Heart right ventricle (tissue), 16 donors: ENCODE measurements at regions of chr11 and their contacts with region 1.

Region 1: GRCh38 chr11:8813658-8814057 is 97.3 kb upstream of the AKIP1 start:
- DNase-seq: peak; percentile 75 to 81
- ATAC-seq: peak; percentile 35 to 61 (median 48)
- H3K4me3 ChIP-seq: no peak overlapping the region
- H3K27ac ChIP-seq: peak overlapping the region in 8 of 10 donors; percentile 31 to 63 (median 43)
- H3K4me1 ChIP-seq: peaks cover 6 to 65% (median 31%) of the 10 kb centered on the region in 9 donors
- H3K27me3 ChIP-seq: no peaks in the 10 kb centered on the region
- CTCF ChIP-seq: peak; percentile 63 to 94 (median 88)

Region 2: GRCh38 chr11:8682303-8683114 is 131.1 kb before region 1 on chr11 and contains the starts of genes RPL27A and TRIM66:
- intact Hi-C with region 1: loop called in 8 of 10 experiments (anchors 2 to 5 kb)
- DNase-seq: peak; percentile 99
- ATAC-seq: peak; percentile 97 to 100 (median 99)
- H3K4me3 ChIP-seq: peak within 1 kb of the TSS; percentile 69 to 99 (median 90)
- H3K27ac ChIP-seq: peak within 1 kb of the TSS; percentile 81 to 97 (median 96)
- H3K4me1 ChIP-seq: peaks cover 6 to 40% (median 30%) of the 10 kb centered on the region in 9 donors
- H3K27me3 ChIP-seq: no peaks in the 10 kb centered on the region
- CTCF ChIP-seq: peak in 4 of 9 donors; percentile 7 to 39 (median 20)
- total RNA-seq, gene RPL27A: 317 to 560 (median 381) TPM
- total RNA-seq, gene TRIM66: 1.8 to 7.4 (median 2.8) TPM

Region 3: GRCh38 chr11:8699903-8700302 is 113.8 kb before region 1 on chr11:
- intact Hi-C with region 1: loop called in 3 of 10 experiments (anchors 5 to 10 kb)
- DNase-seq: peak in 1 of 2 donors; percentile 45
- ATAC-seq: peak in 5 of 8 donors; percentile 10 to 42 (median 22)
- H3K4me3 ChIP-seq: no peak overlapping the region
- H3K27ac ChIP-seq: peak overlapping the region in 9 of 10 donors; percentile 7 to 76 (median 54)
- H3K4me1 ChIP-seq: peaks cover 0 to 41% (median 19%) of the 10 kb centered on the region in 9 donors
- H3K27me3 ChIP-seq: no peaks in the 10 kb centered on the region
- CTCF ChIP-seq: no peak

Region 4: DNA sequence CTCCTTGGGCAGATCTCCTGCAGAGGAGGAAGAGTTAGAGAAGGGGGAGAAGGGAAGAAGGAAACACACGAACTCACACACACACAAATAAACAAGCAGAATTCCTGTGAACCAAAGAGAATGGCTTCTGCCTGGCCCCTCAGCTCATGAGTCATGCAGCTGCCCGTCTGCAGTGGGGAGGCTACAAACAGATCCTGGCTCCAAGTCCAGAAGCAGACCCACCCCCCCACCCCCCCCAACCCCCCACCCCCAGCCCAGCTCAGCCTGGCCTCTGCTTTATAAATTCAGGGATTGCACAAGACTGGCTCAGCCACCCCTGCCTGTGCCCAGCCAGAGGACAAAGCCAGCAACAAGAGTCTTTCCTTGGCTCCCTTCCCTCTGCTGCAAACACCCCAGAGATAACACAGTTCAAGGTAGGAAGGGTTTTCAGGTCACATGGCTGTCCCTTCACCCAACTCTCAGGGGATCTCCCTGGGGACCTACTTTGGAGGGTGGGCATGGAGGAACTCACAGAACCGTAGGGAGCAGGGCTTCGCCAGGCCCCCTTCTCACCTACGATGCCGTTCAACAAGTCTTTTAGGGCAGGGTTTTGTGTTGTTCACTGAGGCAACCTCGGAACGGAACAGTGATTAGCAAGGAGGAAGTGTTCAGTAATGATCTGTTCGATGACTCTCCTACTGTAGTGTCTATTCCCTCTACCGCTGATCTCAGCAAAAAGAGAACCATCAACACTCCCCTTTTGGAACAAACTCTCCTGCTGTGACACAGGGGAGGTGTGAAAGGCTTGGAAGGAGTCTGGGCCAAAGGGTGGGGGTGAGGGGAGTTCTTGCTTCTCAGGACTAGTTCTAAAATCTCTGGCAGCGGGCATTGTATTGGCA is 95.5 kb before region 1 on chr11:
- intact Hi-C with region 1: loop called in 3 of 10 experiments (anchors 5 kb)
- DNase-seq: peak; percentile 39 to 57
- ATAC-seq: peak; percentile 35 to 85 (median 70)
- H3K4me3 ChIP-seq: no peak overlapping the region
- H3K27ac ChIP-seq: peak overlapping the region; percentile 44 to 90 (median 82)
- H3K4me1 ChIP-seq: peaks cover 42 to 99% (median 94%) of the 10 kb centered on the region in 9 donors
- H3K27me3 ChIP-seq: no peaks in the 10 kb centered on the region
- CTCF ChIP-seq: no peak

Region 5: GRCh38 chr11:8870411-8871170 is 56.9 kb after region 1 on chr11:
- intact Hi-C with region 1: loop called in 1 of 10 experiments (anchors 5 kb)
- DNase-seq: peak; percentile 59
- ATAC-seq: peak; percentile 80 to 90 (median 82)
- H3K4me3 ChIP-seq: peak overlapping the region; percentile 59 to 96 (median 86)
- H3K27ac ChIP-seq: peak overlapping the region; percentile 63 to 93 (median 86)
- H3K4me1 ChIP-seq: peaks cover 0 to 73% (median 32%) of the 10 kb centered on the region in 9 donors
- H3K27me3 ChIP-seq: peaks cover 0 to 38% (median 0%) of the 10 kb centered on the region in 7 donors
- CTCF ChIP-seq: no peak

Region 6: DNA sequence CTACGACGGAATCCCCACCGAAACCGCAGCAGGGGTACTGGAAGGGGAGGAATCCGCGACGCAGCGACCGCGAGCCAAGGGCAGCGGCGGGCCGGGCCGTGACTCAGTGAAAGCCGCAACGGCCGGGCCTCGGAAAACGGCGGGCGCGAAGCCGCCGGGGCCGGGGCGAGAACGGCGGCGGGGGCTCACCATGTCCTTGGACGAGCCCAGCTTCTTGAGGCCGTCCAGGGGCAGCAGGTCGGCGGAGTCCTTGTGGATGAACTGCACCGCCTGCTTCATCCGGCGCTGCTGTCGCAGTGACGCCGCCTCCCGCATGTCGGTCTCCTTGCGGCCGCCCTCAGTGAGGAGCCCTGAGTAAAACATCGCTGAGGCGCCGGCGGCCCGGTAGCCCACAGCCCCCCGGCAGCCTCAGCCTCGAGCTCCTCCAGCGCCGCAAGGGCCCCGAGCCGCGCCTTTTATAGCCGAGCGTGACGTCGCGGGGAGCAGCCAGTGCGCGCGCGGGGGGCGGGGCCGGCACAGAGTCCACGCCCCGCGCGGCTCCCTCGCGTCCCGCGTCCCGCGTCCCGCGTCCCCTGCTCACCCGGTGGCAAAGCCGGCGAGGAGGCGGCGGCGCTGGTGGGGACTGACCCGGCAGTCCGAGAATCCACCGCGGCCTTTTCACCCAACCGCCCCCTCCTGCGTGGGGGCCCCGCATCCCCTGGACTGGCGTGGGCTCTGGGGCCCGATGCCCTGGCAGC is 190.1 kb after region 1 on chr11 and contains the start of gene NRIP3:
- intact Hi-C with region 1: no loop called
- DNase-seq: peak; percentile 59 to 76
- ATAC-seq: peak; percentile 84 to 92 (median 86)
- H3K4me3 ChIP-seq: peak within 1 kb of the TSS; percentile 32 to 56 (median 54)
- H3K27ac ChIP-seq: no peak within 1 kb of the TSS
- H3K4me1 ChIP-seq: peaks cover 7 to 27% (median 20%) of the 10 kb centered on the region in 9 donors
- H3K27me3 ChIP-seq: peaks cover 0 to 53% (median 31%) of the 10 kb centered on the region in 7 donors
- CTCF ChIP-seq: no peak
- total RNA-seq, gene NRIP3: 0.32 to 1.9 (median 1.1) TPM